PC-9 (cell line): ENCODE measurements at regions of chr7 and their contacts with region 1.

Region 1: GRCh38 chr7:76108540-76109241 is 60.8 kb downstream of the MDH2 start:
- DNase-seq: peak in 1 of 2 experiments; percentile 56
- H3K4me3 ChIP-seq: no peak overlapping the region
- H3K27ac ChIP-seq: 0 out of 2 replicates have a peak overlapping the region, but pooled peaks have one; percentile 20
- H3K4me1 ChIP-seq: peaks cover 24% of the 10 kb centered on the region
- H3K27me3 ChIP-seq: no peaks in the 10 kb centered on the region
- CTCF ChIP-seq: no peak

Region 2: DNA sequence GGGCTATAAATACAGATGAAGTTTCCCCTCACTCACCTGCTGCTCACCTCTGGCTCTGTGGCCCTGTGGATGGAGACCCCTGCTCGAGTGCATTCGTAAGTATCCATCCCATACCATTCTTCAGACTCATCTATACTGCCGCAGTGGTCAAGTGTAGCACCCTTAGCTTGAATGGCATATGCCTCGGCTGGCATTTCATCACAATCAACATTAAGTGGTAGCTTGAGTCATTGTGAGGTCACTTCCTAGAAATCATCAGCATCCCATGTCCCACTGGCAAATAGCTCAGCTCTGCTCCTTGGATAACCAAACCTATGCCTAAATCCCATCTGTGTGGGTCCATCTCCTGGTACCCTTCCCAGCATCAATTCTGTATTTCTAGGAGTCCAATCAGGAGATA is 22.6 kb before region 1 on chr7:
- CTCF ChIA-PET with region 1: interaction called, 8 read pairs
- POLR2A ChIA-PET with region 1: interaction called, 11 read pairs
- intact Hi-C with region 1: loop called (anchors 2 kb)
- DNase-seq: peak in 1 of 2 experiments; percentile 51
- H3K4me3 ChIP-seq: no peak overlapping the region
- H3K27ac ChIP-seq: peak overlapping the region; percentile 96
- H3K4me1 ChIP-seq: peaks cover 88% of the 10 kb centered on the region
- H3K27me3 ChIP-seq: no peaks in the 10 kb centered on the region
- CTCF ChIP-seq: no peak